Right cardiac atrium (tissue), 5 donors: ENCODE measurements at regions of chr6 and their contacts with region 1.

Region 1: DNA sequence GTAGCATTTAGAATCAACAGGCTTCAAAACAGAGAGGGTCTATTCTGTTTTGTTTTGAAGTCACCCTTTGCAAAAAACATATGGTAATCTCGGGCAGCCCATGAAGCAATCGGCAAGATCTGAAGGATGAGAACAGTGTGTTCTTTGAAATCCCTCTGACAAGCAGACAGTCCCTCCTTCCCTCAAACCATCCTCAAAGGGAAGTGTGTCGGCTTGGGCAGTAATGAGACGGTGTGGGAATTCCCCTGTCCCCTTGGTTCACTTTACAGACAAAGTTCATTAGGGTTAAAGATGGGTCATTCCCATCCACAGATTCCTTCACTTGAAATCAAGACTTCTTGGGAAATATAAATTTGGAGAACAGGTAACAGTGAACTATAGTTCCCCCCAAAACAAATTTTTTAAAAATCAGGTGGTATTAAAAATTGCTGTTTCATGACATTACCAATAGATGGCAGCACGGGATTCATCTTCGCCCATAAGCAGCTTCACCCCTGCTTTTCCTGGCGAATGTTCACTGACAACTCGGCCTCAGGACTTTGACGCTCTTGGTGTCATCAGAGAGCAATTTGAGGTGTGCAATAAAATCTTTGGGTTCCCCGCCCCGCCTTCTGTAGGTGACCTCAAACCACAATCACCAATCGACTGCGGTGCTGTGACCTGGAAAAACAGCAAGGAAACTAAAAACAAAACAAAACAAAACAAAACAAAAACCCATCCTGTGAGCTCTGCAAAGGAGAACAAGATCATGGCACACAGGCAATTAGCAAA is 159.3 kb upstream of the TNFAIP3 start:
- DNase-seq: peak; percentile 44 to 77 (median 61)
- ATAC-seq: peak; percentile 64 to 71
- H3K4me3 ChIP-seq: no peak overlapping the region
- H3K27ac ChIP-seq: no peak overlapping the region
- H3K4me1 ChIP-seq: no peaks in the 10 kb centered on the region
- H3K27me3 ChIP-seq: no peaks in the 10 kb centered on the region

Region 2: GRCh38 chr6:137754366-137754765 is 46.6 kb after region 1 on chr6:
- intact Hi-C with region 1: no loop called
- DNase-seq: no peak
- ATAC-seq: no peak
- H3K4me3 ChIP-seq: no peak overlapping the region
- H3K27ac ChIP-seq: no peak overlapping the region
- H3K4me1 ChIP-seq: no peaks in the 10 kb centered on the region
- H3K27me3 ChIP-seq: no peaks in the 10 kb centered on the region

Region 3: DNA sequence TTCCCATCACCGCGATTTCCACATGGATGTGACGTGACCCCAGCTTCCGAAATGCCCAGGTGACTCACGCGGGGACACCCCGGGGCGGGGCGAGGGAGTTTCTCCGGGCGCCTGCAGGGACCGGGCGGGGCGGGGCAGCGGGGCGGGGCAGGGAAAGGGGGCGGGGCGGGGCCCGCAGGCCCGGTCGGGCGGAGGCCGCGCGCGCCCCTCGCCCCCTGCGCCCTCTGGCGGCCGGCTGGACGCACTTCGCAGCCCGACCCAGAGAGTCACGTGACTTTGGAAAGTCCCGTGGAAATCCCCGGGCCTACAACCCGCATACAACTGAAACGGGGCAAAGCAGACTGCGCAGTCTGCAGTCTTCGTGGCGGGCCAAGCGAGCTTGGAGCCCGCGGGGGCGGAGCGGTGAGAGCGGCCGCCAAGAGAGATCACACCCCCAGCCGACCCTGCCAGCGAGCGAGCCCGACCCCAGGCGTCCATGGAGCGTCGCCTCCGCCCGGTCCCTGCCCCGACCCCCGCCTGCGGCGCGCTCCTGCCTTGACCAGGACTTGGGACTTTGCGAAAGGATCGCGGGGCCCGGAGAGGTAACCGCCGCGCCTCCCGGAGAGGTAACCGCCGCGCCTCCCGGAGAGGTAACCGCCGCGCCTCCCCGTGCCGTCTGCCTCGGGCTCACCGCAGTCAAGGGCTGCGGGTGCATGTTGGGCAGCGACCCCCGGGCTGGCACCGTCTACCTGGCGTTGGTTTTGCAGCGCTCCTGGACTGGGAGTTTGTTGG is 159.3 kb after region 1 on chr6 and contains the start of gene TNFAIP3:
- intact Hi-C with region 1: loop called (anchors 2 to 5 kb)
- DNase-seq: peak; percentile 95 to 97 (median 96)
- ATAC-seq: peak; percentile 91 to 93
- H3K4me3 ChIP-seq: peak within 1 kb of the TSS; percentile 78
- H3K27ac ChIP-seq: peak within 1 kb of the TSS; percentile 78
- H3K4me1 ChIP-seq: peaks cover 5% of the 10 kb centered on the region
- H3K27me3 ChIP-seq: no peaks in the 10 kb centered on the region
- total RNA-seq, gene TNFAIP3: 7.6 to 11.4 (median 10.7) TPM